Calu3 (cell line): ENCODE measurements at regions of chr5 and their contacts with region 1.

Region 1: GRCh38 chr5:120103495-120103894 is 360.6 kb upstream of the PRR16 start:
- DNase-seq: no peak
- H3K4me3 Mint-ChIP-seq: no peak overlapping the region
- H3K27ac Mint-ChIP-seq: no peak overlapping the region
- H3K4me1 Mint-ChIP-seq: no peaks in the 10 kb centered on the region
- H3K27me3 Mint-ChIP-seq: no peaks in the 10 kb centered on the region
- CTCF ChIP-seq: no peak

Region 2: DNA sequence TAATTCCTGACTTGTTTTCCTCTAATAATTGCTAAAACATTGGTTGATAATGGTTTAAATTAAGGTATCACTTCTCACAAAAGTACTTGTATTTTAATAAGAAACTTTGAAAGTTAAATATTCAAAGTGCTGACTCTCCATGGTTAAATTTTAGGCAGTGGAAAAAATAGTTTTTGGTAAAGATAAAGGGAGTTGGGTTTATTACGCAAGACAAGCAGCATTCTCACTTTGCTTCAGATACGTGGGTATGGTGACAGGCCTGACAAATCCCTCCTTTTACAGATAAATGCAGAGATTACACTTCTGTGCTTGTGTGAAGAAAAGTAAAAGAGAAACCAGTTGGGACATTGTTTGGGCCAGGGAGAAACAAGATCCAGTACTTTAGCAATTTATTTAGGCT is 488.7 kb before region 1 on chr5:
- CTCF ChIA-PET with region 1: no interaction called
- intact Hi-C with region 1: no loop called
- DNase-seq: no peak
- H3K4me3 Mint-ChIP-seq: no peak overlapping the region
- H3K27ac Mint-ChIP-seq: no peak overlapping the region
- H3K4me1 Mint-ChIP-seq: no peaks in the 10 kb centered on the region
- H3K27me3 Mint-ChIP-seq: no peaks in the 10 kb centered on the region
- CTCF ChIP-seq: no peak

Region 3: GRCh38 chr5:121325930-121326329 is 1222.4 kb after region 1 on chr5:
- CTCF ChIA-PET with region 1: no interaction called
- intact Hi-C with region 1: loop called (anchors 5 kb)
- DNase-seq: no peak
- H3K4me3 Mint-ChIP-seq: no peak overlapping the region
- H3K27ac Mint-ChIP-seq: no peak overlapping the region
- H3K4me1 Mint-ChIP-seq: no peaks in the 10 kb centered on the region
- H3K27me3 Mint-ChIP-seq: no peaks in the 10 kb centered on the region
- CTCF ChIP-seq: no peak